ENCODE measurements at regions of chr16 and their contacts with region 1.

Region 1: DNA sequence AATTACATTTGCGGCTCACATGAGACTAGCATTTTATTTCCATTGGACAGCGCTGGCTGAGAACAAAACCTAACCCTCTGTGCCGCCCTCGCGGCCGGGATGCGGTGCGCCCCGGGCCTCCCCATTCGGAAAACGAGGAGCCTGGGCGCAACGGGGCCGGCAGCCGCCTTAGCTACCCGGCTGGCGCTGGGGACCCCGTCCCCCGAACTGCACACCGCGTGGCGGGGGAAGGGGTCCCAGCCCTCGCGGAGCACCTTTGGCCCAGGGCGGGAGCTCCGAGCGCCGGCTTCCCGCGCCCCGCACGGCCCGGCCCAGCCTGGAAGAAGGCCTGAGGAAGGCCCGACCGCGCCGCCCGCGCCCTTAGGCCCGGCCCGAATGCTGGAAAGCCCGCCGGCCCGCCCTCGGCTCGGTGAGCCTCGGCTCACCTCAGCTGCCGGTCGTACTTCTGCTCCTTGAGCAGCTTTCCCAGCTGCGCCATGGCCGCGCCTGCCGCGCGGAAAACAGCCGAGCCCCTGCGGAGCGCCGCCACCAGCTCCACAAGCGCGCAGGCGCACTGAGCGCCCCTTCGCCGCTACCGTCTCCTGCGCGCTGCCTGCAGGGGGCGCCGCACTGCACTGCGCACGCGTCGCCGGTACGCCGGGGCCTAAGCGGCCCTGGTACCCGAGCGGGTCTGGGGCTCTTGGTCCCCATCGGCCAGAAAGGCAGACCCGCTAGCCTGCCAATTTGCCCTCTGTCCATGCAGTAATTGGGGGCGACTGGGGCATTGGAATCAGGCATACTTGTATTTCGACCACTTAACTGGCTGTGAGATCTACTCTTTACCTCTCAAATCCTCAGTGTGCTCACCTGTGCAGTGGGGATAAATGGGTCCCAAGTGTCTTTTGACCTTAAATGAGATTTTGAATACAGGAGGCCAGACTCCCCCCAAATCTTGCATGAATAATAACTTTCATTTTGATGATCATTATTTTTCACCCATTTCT is at the start of gene NAE1:
- DNase-seq: peak; percentile 53
- H3K4me3 ChIP-seq: peak within 1 kb of the TSS; percentile 68
- H3K27ac ChIP-seq: no peak within 1 kb of the TSS
- H3K27me3 ChIP-seq: peaks cover 3% of the 10 kb centered on the region
- CTCF ChIP-seq: peak; percentile 89
- polyA plus RNA-seq, gene NAE1: 31.3 and 49.8 TPM in 2 replicates

Region 2: DNA sequence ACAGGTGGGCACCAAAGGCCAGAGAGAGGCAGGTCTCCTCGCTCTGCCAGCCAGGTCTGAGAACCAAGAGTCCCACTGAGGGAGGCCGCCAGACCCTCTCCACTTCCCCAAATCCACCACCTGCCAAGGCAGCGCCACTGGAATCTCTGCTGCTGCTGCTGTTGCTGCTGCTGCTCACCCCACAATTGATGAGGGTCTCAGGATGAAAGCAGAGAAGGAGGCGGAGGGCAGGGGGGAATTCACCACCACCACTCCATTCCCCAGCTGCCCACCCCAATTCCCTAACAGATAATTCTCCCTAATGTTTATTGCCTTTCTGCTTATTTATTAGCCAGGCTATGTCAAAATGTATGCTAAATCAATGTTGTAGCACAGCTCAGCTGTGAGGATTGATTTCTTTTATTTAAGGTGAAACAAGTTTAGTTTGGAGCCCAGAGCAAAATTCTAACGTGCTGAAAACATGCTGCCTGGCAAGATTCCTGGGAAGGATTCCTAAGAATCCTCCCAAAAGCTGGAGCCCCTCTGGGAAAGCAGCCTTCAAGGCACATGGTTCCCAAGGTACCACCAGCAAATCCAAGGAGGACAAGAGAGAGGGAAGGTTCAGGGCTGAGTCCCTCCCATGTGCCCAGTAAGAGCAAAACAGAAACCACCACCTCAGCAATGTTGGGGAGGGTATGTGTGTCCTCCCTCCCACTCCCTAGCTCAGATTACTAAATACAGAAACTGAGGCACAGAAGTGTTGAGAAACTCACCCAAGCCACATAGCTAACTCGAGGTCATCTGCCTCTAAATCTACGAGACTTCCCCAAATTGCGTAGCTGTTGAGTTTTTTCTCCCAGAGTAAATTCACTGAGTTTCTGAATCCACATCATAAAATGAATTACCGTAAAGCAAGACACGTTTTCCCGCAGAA is 476.5 kb before region 1 on chr16:
- CTCF ChIA-PET with region 1: no interaction called
- POLR2A ChIA-PET with region 1: no interaction called
- DNase-seq: no peak
- H3K4me3 ChIP-seq: no peak overlapping the region
- H3K27ac ChIP-seq: no peak overlapping the region
- H3K27me3 ChIP-seq: peaks cover 27% of the 10 kb centered on the region
- CTCF ChIP-seq: no peak

Region 3: GRCh38 chr16:66705790-66706505 is 124.8 kb before region 1 on chr16:
- CTCF ChIA-PET with region 1: no interaction called
- POLR2A ChIA-PET with region 1: no interaction called
- DNase-seq: no peak
- H3K4me3 ChIP-seq: no peak overlapping the region
- H3K27ac ChIP-seq: no peak overlapping the region
- H3K27me3 ChIP-seq: peaks cover 3% of the 10 kb centered on the region
- CTCF ChIP-seq: no peak

Region 4: DNA sequence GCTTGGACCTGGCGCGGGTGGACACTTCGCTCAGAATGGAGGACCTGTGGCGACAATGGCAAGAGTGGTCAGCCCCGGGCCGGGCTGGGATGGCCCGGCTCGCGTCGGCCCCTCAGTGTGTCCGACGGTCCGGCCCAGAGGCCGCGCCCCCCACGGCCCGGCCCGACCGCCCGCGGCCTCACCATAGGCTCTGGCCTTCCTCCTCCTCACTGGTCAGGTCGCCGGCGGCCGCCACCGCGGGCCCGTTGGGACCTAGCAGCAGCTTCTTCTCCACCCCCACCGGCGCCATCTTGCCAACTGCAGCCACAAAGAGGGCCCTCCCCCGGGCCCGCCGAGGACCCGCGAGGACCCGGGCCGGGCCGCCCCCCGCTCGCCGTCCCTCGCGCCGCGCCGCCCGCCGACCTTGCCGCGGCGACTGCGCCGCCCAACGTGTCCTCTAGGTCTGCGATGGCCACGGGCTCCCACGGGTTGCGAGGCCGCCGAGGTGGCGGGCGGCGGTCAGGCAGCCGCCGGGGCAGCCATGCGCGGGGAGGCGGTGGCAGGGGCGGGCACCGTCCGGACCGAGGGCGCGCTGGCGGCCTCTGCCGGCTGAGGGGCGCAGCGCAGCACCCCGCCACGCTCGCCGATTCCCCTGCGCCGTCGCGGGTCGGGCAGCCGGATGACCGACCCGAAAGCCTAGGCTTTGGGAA is 79.3 kb before region 1 on chr16 and contains the start of gene DYNC1LI2:
- CTCF ChIA-PET with region 1: interaction called, 23 read pairs
- POLR2A ChIA-PET with region 1: no interaction called
- DNase-seq: peak; percentile 20
- H3K4me3 ChIP-seq: peak within 1 kb of the TSS; percentile 97
- H3K27ac ChIP-seq: peak within 1 kb of the TSS; percentile 31
- H3K27me3 ChIP-seq: peaks cover 6% of the 10 kb centered on the region
- CTCF ChIP-seq: peak; percentile 58
- polyA plus RNA-seq, gene DYNC1LI2: 86.7 and 88.5 TPM in 2 replicates

Region 5: DNA sequence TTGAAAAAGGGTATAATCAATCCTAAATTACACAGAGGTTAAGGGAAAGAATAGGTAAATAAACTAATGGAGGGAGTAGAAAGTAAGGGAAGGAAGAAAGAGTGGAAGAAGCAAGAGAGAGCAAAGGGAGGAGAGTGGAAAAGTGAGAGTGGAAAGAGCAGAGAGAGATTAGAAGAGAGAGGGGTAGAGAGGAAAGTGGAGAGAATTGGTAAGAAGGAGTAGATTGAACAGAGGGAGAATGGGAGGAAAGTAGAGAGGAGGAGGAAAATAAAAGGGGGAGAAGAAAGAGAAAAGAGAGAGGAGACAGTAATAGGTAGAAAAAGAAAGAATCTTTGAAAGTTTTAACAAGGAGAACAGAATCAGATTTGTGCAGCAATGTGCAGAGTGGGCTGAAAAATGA is 54.3 kb before region 1 on chr16:
- CTCF ChIA-PET with region 1: interaction called, 18 read pairs
- POLR2A ChIA-PET with region 1: no interaction called
- DNase-seq: no peak
- H3K4me3 ChIP-seq: no peak overlapping the region
- H3K27ac ChIP-seq: no peak overlapping the region
- H3K27me3 ChIP-seq: no peaks in the 10 kb centered on the region
- CTCF ChIP-seq: no peak

Region 6: DNA sequence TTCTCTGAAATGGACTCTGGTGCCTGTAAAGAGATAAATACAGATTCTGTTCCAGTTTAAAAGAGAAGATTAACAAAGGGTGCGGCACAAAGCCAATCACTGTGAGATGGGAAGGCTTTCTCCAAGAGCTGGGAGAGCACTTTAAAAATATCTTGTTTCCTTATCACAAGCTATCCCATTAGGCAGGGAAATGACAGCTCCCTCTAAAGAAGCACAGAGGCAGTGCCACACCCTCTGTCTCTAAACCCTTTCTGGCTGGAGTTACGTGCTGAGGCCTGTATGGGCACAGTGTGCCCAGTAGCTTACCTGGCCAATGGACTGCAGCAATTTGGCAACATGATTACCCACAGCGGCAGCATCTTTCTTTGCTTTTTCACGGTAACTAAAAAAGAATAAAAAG is 20.3 kb before region 1 on chr16:
- CTCF ChIA-PET with region 1: interaction called, 69 read pairs
- POLR2A ChIA-PET with region 1: interaction called, 5 read pairs
- DNase-seq: no peak
- H3K4me3 ChIP-seq: no peak overlapping the region
- H3K27ac ChIP-seq: no peak overlapping the region
- H3K27me3 ChIP-seq: no peaks in the 10 kb centered on the region
- CTCF ChIP-seq: no peak

Region 7: DNA sequence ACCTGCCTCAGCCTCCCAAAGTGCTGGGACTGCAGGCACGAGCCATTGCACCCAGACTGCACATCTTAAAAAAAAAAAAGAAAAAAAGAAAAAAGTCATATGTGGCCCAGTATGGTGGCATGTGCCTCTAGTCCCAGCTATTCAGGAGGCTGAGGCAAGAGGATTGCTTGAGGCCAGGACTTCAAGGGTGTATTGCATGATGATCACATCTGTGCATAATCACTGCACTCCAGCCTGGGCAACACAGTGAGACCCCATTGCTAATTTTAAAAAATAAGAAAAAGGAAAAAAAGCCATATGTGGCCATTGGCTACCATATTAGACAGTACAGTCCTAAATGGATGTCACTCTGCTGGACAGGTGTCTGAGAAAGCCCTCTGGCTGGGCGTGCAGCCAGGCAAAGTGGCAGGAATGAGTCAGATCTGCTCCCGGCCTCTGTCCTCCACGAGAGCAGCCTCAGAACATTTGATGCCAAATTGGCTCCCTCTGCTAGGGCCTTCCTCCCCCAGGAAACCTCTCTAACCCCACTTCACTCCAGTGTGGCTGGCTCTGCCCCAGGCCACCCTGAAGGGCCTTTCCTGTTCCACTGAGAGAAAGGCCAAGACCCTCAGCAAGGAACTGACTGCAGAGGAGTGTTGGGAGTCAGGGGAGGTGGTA is 28.2 kb after region 1 on chr16:
- CTCF ChIA-PET with region 1: interaction called, 18 read pairs
- POLR2A ChIA-PET with region 1: no interaction called
- DNase-seq: no peak
- H3K4me3 ChIP-seq: no peak overlapping the region
- H3K27ac ChIP-seq: no peak overlapping the region
- H3K27me3 ChIP-seq: peaks cover 8% of the 10 kb centered on the region
- CTCF ChIP-seq: no peak

Measured in AG04450 (cell line).